PC-9 (cell line): ENCODE measurements at regions of chr12 and their contacts with region 1.

Region 1: DNA sequence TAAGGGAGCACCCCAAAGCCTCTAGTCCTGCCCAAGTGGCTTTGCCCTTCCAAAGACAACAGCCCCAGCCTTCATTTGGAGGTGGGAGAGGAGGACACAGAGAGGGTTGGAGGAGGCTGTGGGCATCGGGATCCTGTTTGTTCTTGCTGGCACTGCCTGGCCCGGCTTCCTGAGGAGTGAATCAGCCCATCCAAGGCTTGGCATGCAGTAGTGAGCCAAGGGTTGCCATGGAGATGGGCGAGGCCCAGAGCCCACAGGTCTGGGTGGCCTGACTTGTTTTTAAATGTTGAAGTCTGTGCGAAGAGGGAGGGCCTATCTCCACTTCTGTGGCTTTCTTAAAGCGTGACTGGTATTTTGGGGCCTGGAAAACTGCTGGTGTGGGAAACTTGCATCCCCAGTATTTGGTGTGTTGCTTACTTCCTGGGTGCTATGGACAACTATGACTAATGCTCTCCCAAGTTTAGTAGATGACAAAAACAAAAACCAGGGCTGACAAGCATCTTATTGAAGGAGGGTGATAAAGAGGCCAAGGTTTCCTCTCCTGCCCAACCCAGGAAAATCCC is 15.8 kb downstream of the CD9 start:
- DNase-seq: peak; percentile 99 to 100
- H3K4me3 ChIP-seq: peak overlapping the region; percentile 32; the same call in 1 of the 2 replicates
- H3K27ac ChIP-seq: peak overlapping the region; percentile 95
- H3K4me1 ChIP-seq: peaks cover 86% of the 10 kb centered on the region
- H3K27me3 ChIP-seq: no peaks in the 10 kb centered on the region
- CTCF ChIP-seq: no peak

Region 2: GRCh38 chr12:5059358-5059757 is 1156.7 kb before region 1 on chr12:
- CTCF ChIA-PET with region 1: no interaction called
- POLR2A ChIA-PET with region 1: no interaction called
- intact Hi-C with region 1: no loop called
- DNase-seq: no peak
- H3K4me3 ChIP-seq: no peak overlapping the region
- H3K27ac ChIP-seq: no peak overlapping the region
- H3K4me1 ChIP-seq: no peaks in the 10 kb centered on the region
- H3K27me3 ChIP-seq: peaks cover 89% of the 10 kb centered on the region
- CTCF ChIP-seq: no peak

Region 3: GRCh38 chr12:6195665-6196535 is 20.1 kb before region 1 on chr12:
- CTCF ChIA-PET with region 1: interaction called, 12 read pairs
- POLR2A ChIA-PET with region 1: interaction called, 35 read pairs
- intact Hi-C with region 1: loop called (anchors 1 kb)
- DNase-seq: peak; percentile 91 to 96
- H3K4me3 ChIP-seq: no peak overlapping the region
- H3K27ac ChIP-seq: peak overlapping the region; percentile 86
- H3K4me1 ChIP-seq: peaks cover 43% of the 10 kb centered on the region
- H3K27me3 ChIP-seq: no peaks in the 10 kb centered on the region
- CTCF ChIP-seq: peak; percentile 96

Region 4: DNA sequence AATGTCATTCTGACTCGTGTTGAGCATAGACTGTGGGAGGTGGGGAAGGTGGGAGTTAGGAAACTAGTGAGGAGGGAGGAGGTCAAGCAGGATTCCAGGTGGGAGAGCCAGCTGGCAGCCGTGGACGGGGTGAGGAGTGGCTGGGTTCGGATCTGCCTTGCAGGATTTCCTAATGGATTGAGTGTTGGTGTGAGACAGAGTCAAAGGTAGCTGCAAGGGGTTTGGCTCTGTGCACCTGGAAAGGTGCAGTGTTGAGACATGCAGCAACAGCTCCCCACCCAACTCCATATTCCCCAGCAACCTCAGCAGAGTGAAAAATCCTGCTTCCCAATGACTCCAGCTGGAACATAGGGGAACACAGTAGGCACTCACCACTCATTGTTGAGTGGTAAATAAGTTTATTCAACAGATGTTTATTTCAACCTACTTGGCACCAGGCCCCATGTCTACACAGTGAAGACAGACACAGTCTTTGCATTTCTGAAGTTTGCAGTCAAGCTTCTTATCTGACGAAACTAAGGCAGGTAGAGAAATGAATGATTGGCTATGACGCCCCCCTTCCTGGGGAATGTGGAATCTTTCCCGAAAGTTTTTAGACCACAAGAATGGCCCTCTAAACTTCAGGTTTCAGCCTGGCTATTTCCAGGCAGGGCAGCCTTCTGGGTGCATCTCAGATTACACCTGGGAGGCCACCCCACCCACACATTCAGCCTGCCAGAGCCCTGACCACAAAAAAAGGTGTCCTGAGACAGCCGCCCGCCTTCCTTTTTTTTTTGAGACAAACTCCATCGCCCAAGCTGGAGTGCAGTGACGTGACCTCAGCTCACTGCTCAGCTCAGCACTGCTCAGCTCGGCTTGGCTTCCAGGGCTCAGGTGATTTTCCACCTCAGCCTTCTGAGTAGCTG is 56.5 kb after region 1 on chr12:
- CTCF ChIA-PET with region 1: interaction called, 5 read pairs
- POLR2A ChIA-PET with region 1: interaction called, 21 read pairs
- intact Hi-C with region 1: loop called (anchors 1 kb)
- DNase-seq: peak; percentile 99
- H3K4me3 ChIP-seq: peak overlapping the region; percentile 23; the same call in 1 of the 2 replicates
- H3K27ac ChIP-seq: peak overlapping the region; percentile 98
- H3K4me1 ChIP-seq: peaks cover 64% of the 10 kb centered on the region
- H3K27me3 ChIP-seq: no peaks in the 10 kb centered on the region
- CTCF ChIP-seq: no peak

Region 5: GRCh38 chr12:6295094-6295811 is 79.2 kb after region 1 on chr12:
- CTCF ChIA-PET with region 1: no interaction called
- POLR2A ChIA-PET with region 1: interaction called, 3 read pairs
- intact Hi-C with region 1: loop called (anchors 1 kb)
- DNase-seq: peak; percentile 95 to 99
- H3K4me3 ChIP-seq: no peak overlapping the region; the same call in 1 of the 2 replicates
- H3K27ac ChIP-seq: peak overlapping the region; percentile 91
- H3K4me1 ChIP-seq: peaks cover 64% of the 10 kb centered on the region
- H3K27me3 ChIP-seq: no peaks in the 10 kb centered on the region
- CTCF ChIP-seq: no peak

Region 6: DNA sequence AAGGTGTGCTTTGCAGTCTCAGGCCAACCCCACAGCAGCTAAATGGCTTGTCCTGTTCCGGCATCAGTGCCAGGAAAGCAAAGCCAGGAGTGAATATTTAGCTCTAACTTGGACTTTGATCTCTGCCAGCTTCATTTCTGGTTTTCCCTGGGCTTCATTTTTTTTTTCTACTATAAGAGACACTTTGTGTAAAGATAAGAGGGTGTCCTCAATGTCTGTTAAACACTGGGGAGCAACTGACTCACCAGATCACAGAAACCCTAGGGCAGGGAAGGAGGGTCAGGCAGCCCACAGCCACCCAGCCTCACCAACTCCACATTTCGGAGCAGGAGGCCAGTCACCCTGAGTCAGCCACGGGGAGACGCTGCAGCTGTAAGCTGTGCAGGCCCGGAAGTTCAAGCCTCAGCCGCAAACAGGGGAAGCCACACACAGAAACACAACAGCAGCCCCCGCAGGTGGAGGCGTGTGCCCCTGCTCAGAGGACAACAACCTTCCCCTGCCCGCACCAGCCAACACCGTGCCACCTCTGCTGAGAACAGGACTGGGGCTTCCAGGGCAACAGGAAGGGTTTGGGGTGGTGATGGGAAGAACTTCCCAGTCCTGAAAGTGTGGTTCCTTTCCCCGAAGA is 119.6 kb after region 1 on chr12:
- CTCF ChIA-PET with region 1: no interaction called
- POLR2A ChIA-PET with region 1: no interaction called
- intact Hi-C with region 1: loop called (anchors 1 kb)
- DNase-seq: peak; percentile 76
- H3K4me3 ChIP-seq: peak overlapping the region; percentile 49
- H3K27ac ChIP-seq: peak overlapping the region; percentile 95
- H3K4me1 ChIP-seq: peaks cover 82% of the 10 kb centered on the region
- H3K27me3 ChIP-seq: no peaks in the 10 kb centered on the region
- CTCF ChIP-seq: peak; percentile 53; the same call in 1 of the 2 replicates

Region 7: GRCh38 chr12:6430124-6430989 is 214.3 kb after region 1 on chr12:
- CTCF ChIA-PET with region 1: no interaction called
- POLR2A ChIA-PET with region 1: no interaction called
- intact Hi-C with region 1: loop called (anchors 1 kb)
- DNase-seq: peak; percentile 97 to 98
- H3K4me3 ChIP-seq: peak overlapping the region; percentile 37
- H3K27ac ChIP-seq: peak overlapping the region; percentile 98
- H3K4me1 ChIP-seq: peaks cover 29% of the 10 kb centered on the region
- H3K27me3 ChIP-seq: no peaks in the 10 kb centered on the region
- CTCF ChIP-seq: no peak

Region 8: DNA sequence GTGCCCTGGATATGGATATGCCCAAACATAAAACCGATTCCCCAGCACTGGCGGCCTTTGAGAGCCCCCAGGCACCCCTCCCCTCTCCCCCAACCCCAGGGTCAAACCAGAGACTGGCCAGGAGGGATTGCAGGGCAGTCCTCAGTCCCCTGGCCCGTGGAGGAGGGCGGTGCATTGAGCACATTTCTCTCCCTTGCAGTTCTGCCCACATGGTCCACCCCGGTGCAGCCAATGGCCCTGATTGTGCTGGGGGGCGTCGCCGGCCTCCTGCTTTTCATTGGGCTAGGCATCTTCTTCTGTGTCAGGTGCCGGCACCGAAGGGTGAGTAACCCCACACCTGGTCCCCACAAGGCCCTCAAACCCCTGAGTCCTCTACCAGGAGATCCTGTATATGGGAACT is 602.2 kb after region 1 on chr12:
- CTCF ChIA-PET with region 1: no interaction called
- POLR2A ChIA-PET with region 1: no interaction called
- intact Hi-C with region 1: no loop called
- DNase-seq: no peak
- H3K4me3 ChIP-seq: no peak overlapping the region
- H3K27ac ChIP-seq: no peak overlapping the region
- H3K4me1 ChIP-seq: no peaks in the 10 kb centered on the region; the same call in 1 of the 2 replicates
- H3K27me3 ChIP-seq: peaks cover 66% of the 10 kb centered on the region
- CTCF ChIP-seq: no peak